H1 (cell line): ENCODE measurements at regions of chr2 and their contacts with region 1.

Region 1: DNA sequence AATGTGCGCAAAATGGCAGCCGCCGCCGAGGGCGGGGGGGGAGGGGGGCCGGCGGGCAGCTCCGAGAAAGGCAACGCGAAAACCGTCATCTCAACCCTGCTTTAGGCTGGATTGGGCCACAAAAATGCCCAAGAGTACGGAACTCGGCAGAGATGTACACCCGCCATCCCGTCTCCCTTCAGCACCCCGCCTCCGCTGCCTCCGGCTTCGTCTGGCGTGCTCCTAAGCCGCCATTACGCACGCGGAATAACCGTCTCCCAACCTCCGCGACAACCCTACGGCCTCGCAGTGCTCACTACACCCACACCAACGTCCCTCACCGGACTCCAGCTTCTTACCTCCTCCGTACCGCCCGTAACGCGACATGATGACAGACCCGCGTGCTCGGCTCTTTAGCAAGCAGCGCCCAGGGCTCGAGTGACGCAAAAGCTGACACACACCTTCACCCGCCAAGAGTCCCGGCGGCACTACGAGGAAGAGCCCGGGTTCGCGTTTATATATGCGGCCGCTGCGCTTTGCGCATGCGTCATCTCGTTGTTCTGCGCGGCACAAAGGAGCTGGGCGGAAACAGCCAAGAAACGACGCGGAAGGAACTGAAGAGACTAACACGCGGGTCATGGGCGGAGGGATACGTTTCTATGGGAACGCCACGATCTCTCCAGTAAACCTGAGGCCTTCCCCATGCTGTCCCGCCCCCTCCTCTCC is at the start of gene SRSF7:
- DNase-seq: peak; percentile 98 to 99
- H3K4me3 ChIP-seq: peak within 1 kb of the TSS; percentile 93 to 100 (median 97)
- H3K27ac ChIP-seq: peak within 1 kb of the TSS; percentile 100
- H3K4me1 ChIP-seq: peaks cover 0 to 8% (median 2%) of the 10 kb centered on the region in 4 experiments; a peak in 3 of 7 replicates
- H3K27me3 ChIP-seq: no peaks in the 10 kb centered on the region
- CTCF ChIP-seq: no peak
- EP300 ChIP-seq: 0 out of 3 replicates have a peak, but pooled peaks of 1 of the 2 experiments have one; percentile 63
- POLR2A ChIP-seq: peak; percentile 100
- RAD21 ChIP-seq: peak; percentile 2 to 6; a peak in 1 of 4 replicates
- total RNA-seq, gene SRSF7: 370 and 378 TPM in 2 replicates

Region 2: DNA sequence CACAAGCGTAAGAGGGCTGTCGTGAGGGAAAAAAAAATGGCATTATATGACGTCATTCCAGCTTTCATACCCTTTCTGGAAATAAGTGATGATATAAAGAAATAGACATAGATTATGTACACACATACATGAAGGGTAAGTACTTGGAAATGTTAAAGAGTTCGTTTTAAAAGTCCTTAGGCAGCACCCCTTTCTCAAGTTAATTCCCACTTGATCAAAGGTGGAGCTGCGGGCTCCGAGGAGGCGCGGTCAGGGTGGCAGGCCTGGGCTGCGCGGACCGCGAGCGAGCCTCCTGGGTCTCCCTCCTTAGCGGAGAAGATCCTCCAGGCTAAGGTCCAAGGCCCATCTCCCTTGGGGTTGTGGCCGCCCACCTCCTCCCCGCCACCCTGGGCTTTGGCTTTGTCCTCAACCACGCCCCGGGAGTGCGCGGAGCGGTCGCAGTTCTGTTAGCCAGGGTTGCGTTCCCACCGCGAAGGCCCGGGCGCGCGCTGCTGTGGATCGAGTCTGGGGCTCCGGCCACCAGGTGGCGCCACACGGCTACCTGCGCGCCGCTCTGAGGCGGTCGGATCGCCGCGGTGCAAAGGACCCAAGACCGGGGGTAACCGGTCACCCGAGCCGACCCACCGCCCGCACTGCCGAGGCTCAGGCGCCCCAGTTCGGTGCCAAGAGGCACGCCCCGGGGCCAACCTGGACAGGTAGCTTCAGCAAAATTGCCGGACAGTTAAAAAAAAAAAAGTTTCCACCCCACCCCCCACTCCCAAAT is 215.1 kb before region 1 on chr2:
- CTCF ChIA-PET with region 1: interaction called, 4 read pairs
- POLR2A ChIA-PET with region 1: interaction called, 32 read pairs
- DNase-seq: peak in 1 of 2 experiments; percentile 97
- H3K4me3 ChIP-seq: peak overlapping the region; percentile 28 to 63 (median 52)
- H3K27ac ChIP-seq: no peak overlapping the region
- H3K4me1 ChIP-seq: peaks cover 0 to 5% (median 1%) of the 10 kb centered on the region in 4 experiments; a peak in 5 of 7 replicates
- H3K27me3 ChIP-seq: peaks cover 0 to 12% (median 6%) of the 10 kb centered on the region in 4 experiments; a peak in 4 of 7 replicates
- CTCF ChIP-seq: peak; percentile 85 to 91 (median 86)
- EP300 ChIP-seq: no peak
- POLR2A ChIP-seq: no peak
- RAD21 ChIP-seq: peak; percentile 82 to 90

Region 3: DNA sequence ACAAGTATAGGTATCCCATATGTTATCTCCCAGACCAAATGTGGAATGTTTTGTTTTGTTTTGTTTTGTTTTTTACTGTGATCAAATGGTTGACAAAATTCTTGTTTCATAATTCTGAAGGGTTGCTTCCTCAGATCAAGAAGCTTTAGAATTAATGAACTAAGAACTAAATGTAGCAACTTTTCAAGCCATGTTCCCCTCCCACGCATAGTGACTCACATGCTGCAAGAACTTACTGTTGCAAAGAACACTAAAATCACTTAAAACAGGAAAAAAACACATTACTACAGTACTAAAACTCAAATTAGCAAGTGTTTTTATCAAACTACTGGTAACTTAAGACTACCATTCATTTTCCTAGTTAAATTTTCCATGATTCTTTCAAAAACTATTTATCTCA is 178.9 kb before region 1 on chr2:
- CTCF ChIA-PET with region 1: interaction called, 3 read pairs
- POLR2A ChIA-PET with region 1: interaction called, 10 read pairs
- DNase-seq: no peak
- H3K4me3 ChIP-seq: no peak overlapping the region
- H3K27ac ChIP-seq: no peak overlapping the region
- H3K4me1 ChIP-seq: no peaks in the 10 kb centered on the region
- H3K27me3 ChIP-seq: no peaks in the 10 kb centered on the region
- CTCF ChIP-seq: no peak
- EP300 ChIP-seq: no peak
- POLR2A ChIP-seq: no peak
- RAD21 ChIP-seq: no peak

Region 4: DNA sequence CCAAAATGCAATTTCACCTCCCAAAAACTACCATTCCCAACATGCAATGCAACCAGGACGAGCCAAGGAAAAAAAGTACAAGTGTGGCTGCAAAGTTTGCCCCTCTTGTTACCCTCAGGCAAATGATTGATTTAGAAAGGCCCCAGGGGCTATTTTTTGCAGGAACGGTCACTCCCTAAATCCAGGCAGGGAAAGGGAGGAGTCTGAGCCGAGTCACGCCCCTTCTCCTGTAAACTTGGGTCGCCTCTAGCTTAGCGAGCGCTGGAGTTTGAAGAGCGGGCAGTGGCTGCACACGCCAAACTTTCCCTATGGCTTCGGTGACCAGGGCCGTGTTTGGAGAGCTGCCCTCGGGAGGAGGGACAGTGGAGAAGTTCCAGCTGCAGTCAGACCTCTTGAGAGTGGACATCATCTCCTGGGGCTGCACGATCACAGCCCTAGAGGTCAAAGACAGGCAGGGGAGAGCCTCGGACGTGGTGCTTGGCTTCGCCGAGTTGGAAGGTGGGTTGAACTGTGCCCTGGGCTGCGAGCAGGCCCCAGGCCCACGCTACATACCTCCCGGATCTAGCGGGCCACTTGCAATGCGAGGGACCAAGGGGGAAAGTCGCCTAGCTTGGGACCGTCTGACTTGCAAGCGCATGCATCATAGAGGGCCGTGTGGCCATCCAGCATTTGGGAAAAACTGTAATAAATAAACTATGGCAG is 85.0 kb before region 1 on chr2 and contains the start of gene GALM:
- CTCF ChIA-PET with region 1: no interaction called
- POLR2A ChIA-PET with region 1: interaction called, 28 read pairs
- DNase-seq: peak; percentile 80 to 81
- H3K4me3 ChIP-seq: peak within 1 kb of the TSS; percentile 44 to 85 (median 76)
- H3K27ac ChIP-seq: peak within 1 kb of the TSS; percentile 6; the same call in 1 of the 2 replicates
- H3K4me1 ChIP-seq: peaks cover 0 to 7% (median 2%) of the 10 kb centered on the region in 4 experiments; a peak in 4 of 7 replicates
- H3K27me3 ChIP-seq: no peaks in the 10 kb centered on the region
- CTCF ChIP-seq: no peak
- EP300 ChIP-seq: no peak
- POLR2A ChIP-seq: peak in 1 of 2 experiments; percentile 66; a peak in 2 of 3 replicates
- RAD21 ChIP-seq: no peak
- total RNA-seq, gene GALM: 12.0 and 13.1 TPM in 2 replicates

Region 5: DNA sequence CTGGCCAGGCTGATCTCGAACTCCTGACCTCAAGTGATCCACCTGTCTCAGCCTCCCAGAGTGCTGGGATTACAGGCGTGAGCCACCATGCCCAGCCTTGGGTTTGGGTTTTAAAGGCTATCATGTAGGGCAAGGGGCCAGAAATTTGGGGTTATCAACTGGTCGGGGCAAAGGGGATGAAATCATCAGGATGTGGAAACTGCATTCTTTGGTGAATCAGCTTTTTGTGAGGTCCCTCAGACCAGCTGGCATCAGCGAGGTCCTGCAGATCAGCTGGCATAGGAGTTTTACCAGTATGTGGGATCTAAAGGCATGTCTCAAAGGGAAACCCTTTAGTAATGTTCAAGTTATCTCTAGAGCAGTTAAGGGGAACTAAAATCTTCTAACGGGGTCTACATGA is 20.6 kb after region 1 on chr2:
- CTCF ChIA-PET with region 1: no interaction called
- POLR2A ChIA-PET with region 1: interaction called, 153 read pairs
- DNase-seq: no peak
- H3K4me3 ChIP-seq: no peak overlapping the region
- H3K27ac ChIP-seq: no peak overlapping the region
- H3K4me1 ChIP-seq: no peaks in the 10 kb centered on the region
- H3K27me3 ChIP-seq: no peaks in the 10 kb centered on the region; a peak in 2 of 7 replicates
- CTCF ChIP-seq: no peak
- EP300 ChIP-seq: no peak
- POLR2A ChIP-seq: no peak
- RAD21 ChIP-seq: no peak

Region 6: DNA sequence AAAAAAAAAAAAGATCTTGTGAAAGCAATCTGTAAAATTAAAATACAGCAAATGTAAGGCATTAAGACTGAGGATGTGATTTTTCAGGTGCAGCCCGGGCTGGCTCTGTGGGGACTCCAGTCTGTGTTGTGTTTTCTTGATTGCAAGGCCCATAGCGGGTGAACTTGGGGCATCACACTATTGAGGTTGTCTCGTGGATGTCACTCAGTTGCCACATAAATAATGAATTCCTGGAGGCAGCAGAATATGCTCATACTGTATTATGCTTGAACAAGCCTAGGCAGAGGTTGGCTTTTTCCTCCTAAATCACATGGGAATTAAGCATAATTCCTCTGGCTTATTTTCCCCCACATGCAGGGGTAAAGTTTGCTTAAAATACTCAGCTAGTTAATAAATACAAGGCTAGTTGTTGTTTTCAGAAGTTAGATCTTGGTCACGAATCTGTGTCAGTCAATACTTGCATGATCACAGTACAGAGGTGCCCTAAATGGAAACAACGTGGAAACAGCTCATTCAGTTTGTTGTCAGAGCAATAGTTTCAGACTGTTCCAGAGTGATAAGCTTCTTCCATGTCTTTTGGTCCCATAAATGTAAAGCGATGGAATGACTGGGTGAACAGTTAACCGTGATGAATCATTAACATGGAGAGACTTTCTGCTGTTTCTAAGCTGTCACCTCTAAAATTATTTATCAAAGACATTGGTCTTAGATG is 43.3 kb after region 1 on chr2:
- CTCF ChIA-PET with region 1: no interaction called
- POLR2A ChIA-PET with region 1: interaction called, 21 read pairs
- DNase-seq: no peak
- H3K4me3 ChIP-seq: no peak overlapping the region
- H3K27ac ChIP-seq: no peak overlapping the region
- H3K4me1 ChIP-seq: no peaks in the 10 kb centered on the region
- H3K27me3 ChIP-seq: no peaks in the 10 kb centered on the region
- CTCF ChIP-seq: no peak
- EP300 ChIP-seq: no peak
- POLR2A ChIP-seq: no peak
- RAD21 ChIP-seq: no peak

Region 7: GRCh38 chr2:38829971-38830370 is 78.9 kb after region 1 on chr2:
- CTCF ChIA-PET with region 1: interaction called, 3 read pairs
- POLR2A ChIA-PET with region 1: interaction called, 14 read pairs
- DNase-seq: no peak
- H3K4me3 ChIP-seq: no peak overlapping the region
- H3K27ac ChIP-seq: no peak overlapping the region
- H3K4me1 ChIP-seq: peaks cover 0 to 3% (median 0%) of the 10 kb centered on the region in 4 experiments; a peak in 1 of 7 replicates
- H3K27me3 ChIP-seq: no peaks in the 10 kb centered on the region
- CTCF ChIP-seq: no peak
- EP300 ChIP-seq: no peak
- POLR2A ChIP-seq: no peak
- RAD21 ChIP-seq: no peak